Naive thymus-derived CD8-positive, alpha-beta T cell (primary cell): ENCODE measurements at regions of chr6 and their contacts with region 1.

Region 1: DNA sequence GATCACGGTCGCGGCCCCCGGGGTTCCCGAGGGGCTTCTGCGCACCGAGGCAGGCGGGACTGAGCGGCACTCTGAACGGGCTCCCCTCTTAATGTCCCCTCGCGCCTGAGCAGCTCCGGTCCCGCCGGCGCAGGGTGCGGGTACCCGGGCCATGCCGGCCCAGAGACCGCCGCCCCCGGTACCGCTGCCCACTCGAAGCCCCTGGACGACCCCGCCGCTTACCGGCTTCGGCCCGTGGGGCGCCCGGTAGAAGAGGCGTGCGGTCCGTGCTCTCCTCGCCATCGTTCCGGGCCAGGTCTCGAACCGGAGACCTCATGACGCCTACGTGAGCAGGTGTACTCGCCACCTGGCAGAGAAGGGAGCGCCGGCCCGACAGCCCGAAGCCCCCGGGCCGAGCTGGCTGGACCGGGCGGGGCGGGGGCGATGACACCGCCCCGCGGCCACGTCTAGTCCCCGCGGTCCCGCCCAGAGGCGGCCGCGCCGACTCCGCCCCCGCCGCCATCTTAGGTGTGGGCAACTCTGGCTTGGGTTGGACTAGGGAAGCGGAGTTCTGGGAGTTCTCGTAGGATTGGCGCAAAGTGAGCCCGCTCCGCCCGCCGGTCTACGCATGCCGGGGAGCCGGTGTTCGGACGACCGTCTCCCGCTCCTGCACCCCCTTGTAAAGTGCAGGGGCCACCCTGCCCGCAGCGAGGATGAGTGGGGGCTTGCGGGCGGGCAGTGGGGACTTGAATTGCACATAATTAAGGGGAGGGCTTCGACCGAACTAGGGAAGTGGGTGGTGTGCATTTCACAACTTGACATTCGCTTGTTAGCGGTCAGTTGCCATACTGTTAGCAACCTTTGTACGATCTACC is at the start of gene SLC17A5:
- DNase-seq: peak; percentile 78 to 93 (median 86)
- ATAC-seq: peak; percentile 86
- H3K4me3 Mint-ChIP-seq: peak within 1 kb of the TSS; percentile 91 to 99 (median 99)
- H3K27ac Mint-ChIP-seq: peak within 1 kb of the TSS; percentile 85 to 99 (median 98)
- H3K4me1 Mint-ChIP-seq: peaks cover 12 to 36% (median 30%) of the 10 kb centered on the region in 4 donors
- H3K27me3 Mint-ChIP-seq: no peaks in the 10 kb centered on the region
- polyA plus RNA-seq, gene SLC17A5: 4.9 to 8.8 (median 6.5) TPM

Region 2: GRCh38 chr6:73461537-73462350 is 192.1 kb before region 1 on chr6 and contains the start of gene MTO1:
- POLR2A ChIA-PET with region 1: interaction called, 26 read pairs
- DNase-seq: peak; percentile 66 to 91 (median 81)
- ATAC-seq: peak; percentile 93 to 95
- H3K4me3 Mint-ChIP-seq: peak within 1 kb of the TSS; percentile 93 to 100 (median 97)
- H3K27ac Mint-ChIP-seq: peak within 1 kb of the TSS; percentile 94 to 99 (median 98)
- H3K4me1 Mint-ChIP-seq: peaks cover 4 to 49% (median 29%) of the 10 kb centered on the region in 4 donors
- H3K27me3 Mint-ChIP-seq: no peaks in the 10 kb centered on the region
- polyA plus RNA-seq, gene MTO1: 23.6 to 33.0 (median 25.0) TPM

Region 3: DNA sequence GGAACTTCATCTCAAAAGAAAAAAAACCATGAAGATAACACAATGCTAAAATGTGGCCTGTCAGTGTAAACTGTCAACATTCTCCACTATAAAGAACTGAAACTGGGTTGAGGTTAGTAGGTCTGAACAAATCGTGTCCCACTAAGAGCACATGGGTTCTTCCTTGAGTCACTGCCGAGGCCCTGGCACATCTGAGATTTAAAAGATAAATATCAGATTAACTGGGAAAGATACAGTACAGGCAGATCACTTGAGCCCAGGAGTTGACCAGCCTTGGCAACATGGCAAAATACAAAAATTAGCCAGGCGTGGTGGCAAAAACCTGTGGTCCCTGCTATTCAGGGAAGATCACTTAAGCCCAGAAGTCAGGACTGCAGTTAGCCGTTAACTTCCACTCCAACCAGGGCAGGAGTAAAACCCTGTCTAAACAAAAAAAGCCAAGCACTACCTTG is 138.6 kb before region 1 on chr6:
- POLR2A ChIA-PET with region 1: interaction called, 90 read pairs
- DNase-seq: no peak
- ATAC-seq: no peak
- H3K4me3 Mint-ChIP-seq: peak overlapping the region in 7 of 10 donors; percentile 35 to 65 (median 48)
- H3K27ac Mint-ChIP-seq: peak overlapping the region; percentile 66 to 92 (median 81)
- H3K4me1 Mint-ChIP-seq: peaks cover 18 to 58% (median 55%) of the 10 kb centered on the region in 4 donors
- H3K27me3 Mint-ChIP-seq: no peaks in the 10 kb centered on the region

Region 4: DNA sequence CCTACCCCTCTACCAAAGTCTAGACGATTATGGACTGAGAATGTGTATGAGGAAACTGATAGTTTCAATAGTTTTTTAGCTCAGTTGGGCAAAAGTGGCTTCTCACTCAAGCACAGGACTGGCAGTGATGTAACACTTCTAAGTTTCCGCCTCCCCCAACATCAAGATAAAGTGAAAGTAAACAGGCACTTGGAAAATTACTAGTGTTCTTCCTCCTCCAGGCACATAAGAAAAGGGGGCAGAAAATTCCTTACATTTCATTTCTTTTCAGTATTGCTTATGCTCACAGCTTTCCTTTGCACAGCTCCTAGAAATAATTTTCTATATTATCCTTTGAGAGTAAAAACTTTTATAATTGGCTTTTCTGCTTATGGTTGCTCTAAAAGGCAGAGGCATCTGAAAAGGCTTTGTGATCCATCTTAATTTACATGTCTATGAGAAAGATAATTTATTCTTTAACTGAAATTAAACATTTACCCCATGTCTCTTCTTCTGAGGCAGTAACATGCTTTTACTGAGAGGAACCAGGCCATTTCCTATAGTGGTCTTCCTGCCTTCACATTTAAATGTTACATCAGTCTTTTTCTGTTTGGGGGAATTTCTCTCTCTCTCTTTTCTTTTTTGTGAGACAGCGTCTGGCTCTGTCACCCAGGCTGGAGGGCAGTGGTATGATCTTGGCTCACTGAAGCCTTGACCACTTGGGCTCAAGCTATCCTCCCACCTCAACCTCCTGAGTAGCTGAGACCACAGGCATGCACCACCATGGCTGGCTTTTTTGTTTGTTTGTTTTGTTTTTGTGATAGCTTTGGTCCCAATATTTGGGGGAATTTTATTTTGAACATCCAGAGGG is 68.0 kb before region 1 on chr6:
- POLR2A ChIA-PET with region 1: interaction called, 13 read pairs
- DNase-seq: peak in 8 of 10 donors; percentile 18 to 68 (median 56)
- ATAC-seq: peak; percentile 85
- H3K4me3 Mint-ChIP-seq: peak overlapping the region; percentile 78 to 92 (median 88)
- H3K27ac Mint-ChIP-seq: peak overlapping the region; percentile 98 to 100 (median 99)
- H3K4me1 Mint-ChIP-seq: peaks cover 12 to 47% (median 32%) of the 10 kb centered on the region in 4 donors
- H3K27me3 Mint-ChIP-seq: no peaks in the 10 kb centered on the region

Region 5: DNA sequence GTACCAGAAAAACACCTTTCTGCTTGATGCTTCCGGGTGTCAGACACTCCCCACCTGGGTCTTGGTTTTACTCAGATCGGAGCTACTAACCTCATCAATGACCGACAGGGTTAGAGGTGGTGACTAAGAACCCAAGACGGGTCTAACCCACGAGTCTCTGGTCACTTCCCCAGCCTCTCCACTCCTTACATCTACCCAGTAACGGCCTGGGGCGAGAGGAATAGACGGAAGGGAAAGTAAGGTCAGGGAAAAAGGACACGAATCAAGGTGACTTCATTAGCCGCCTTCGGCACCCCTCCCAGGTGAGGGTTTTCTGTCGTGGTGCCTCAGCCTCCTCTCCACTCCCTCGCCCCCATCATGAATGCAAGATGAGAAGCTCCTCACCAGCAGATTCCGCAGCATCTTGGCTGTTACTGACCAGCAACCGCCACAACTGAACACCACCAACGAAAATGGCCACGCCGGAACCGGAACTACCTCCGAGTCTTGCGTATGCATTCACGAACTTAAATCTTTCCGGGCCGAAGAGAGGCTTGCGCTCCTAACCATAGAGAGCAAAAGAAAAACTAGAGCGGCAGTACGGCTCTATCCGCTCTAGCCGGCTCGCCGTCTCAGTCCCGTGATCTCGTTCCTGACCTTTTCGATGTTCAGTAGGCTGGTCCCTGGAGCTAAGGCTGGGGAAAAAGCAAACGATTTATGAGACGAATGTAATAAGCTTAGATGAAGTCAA is 1589.7 kb after region 1 on chr6 and contains the start of gene COX7A2:
- POLR2A ChIA-PET with region 1: interaction called, 10 read pairs
- DNase-seq: peak; percentile 64 to 92 (median 82)
- ATAC-seq: peak; percentile 96 to 97
- H3K4me3 Mint-ChIP-seq: peak within 1 kb of the TSS; percentile 96 to 100 (median 98)
- H3K27ac Mint-ChIP-seq: peak within 1 kb of the TSS; percentile 96 to 99 (median 99)
- H3K4me1 Mint-ChIP-seq: peaks cover 6 to 39% (median 31%) of the 10 kb centered on the region in 4 donors
- H3K27me3 Mint-ChIP-seq: peaks cover 0 to 18% (median 0%) of the 10 kb centered on the region in 5 donors
- polyA plus RNA-seq, gene COX7A2: 788 to 1,025 (median 870) TPM

Region 6: DNA sequence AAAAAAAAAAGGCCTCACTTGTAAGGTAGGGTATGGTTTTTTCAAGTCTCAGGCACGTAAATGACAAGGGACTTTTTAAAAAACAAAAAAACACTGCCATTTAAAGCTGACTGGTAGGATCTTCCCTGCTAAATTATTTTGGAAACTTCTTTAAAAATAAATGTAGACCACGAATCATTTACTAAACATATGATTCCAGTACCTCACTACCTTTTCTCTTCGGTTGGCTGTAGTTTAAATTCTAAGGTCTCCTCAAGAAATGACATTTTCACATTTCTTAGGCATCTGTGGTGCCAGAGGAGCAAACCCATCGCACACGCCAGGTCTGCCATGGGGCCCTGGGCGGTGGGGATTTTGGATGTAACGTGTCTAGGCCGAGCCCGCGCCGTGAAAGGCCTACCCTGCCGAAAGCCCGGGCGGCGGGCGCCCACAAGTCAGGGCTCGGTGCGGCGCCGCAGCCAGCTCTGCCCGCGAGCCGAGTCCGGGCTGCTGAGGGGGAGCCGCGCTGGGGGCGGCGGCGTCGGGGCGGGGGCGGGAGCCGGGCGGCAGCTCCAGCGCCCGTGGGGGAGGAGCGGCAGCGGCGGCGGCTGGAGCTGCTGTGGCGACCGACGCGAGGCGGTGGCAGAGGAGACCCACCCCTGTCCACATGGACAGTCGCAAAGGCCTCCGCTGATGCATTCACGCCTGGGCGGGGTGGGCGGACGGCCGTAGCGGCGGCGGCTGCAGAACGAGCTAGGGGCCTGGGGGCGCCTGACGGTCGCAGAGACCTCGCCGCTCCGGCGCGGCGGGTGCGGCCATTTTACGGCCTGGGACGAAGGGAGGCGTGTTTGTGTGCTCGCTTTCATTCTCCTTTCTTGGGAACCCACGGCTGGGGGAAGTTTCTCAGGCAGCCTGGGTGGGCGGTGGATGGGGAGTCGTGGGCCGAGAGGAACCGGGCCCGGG is 1947.8 kb after region 1 on chr6 and contains the start of gene SENP6:
- POLR2A ChIA-PET with region 1: interaction called, 13 read pairs
- DNase-seq: peak; percentile 61 to 89 (median 73)
- ATAC-seq: peak; percentile 68 to 79
- H3K4me3 Mint-ChIP-seq: peak within 1 kb of the TSS; percentile 95 to 100 (median 98)
- H3K27ac Mint-ChIP-seq: peak within 1 kb of the TSS; percentile 92 to 100 (median 98)
- H3K4me1 Mint-ChIP-seq: peaks cover 31 to 73% (median 66%) of the 10 kb centered on the region in 4 donors
- H3K27me3 Mint-ChIP-seq: no peaks in the 10 kb centered on the region
- polyA plus RNA-seq, gene SENP6: 48.4 to 67.3 (median 57.7) TPM